OCI-LY7 (cell line): ENCODE measurements at regions of chr7 and their contacts with region 1.

Region 1: GRCh38 chr7:139359366-139360209 is at the start of gene LUC7L2:
- DNase-seq: peak; percentile 99
- H3K4me3 ChIP-seq: peak within 1 kb of the TSS; percentile 90
- H3K27ac ChIP-seq: peak within 1 kb of the TSS; percentile 93
- H3K4me1 ChIP-seq: peaks cover 30% of the 10 kb centered on the region
- CTCF ChIP-seq: 0 out of 2 replicates have a peak, but pooled peaks have one; percentile 26
- total RNA-seq, gene LUC7L2: 79.6 and 94.9 TPM in 2 replicates

Region 2: GRCh38 chr7:139043823-139044812 is 315.5 kb before region 1 on chr7:
- CTCF ChIA-PET with region 1: no interaction called
- POLR2A ChIA-PET with region 1: no interaction called
- intact Hi-C with region 1: no loop called
- DNase-seq: no peak
- H3K4me3 ChIP-seq: no peak overlapping the region
- H3K27ac ChIP-seq: no peak overlapping the region
- H3K4me1 ChIP-seq: no peaks in the 10 kb centered on the region
- CTCF ChIP-seq: no peak

Region 3: GRCh38 chr7:139230774-139231512 is 128.6 kb before region 1 on chr7 and contains the start of gene UBN2:
- CTCF ChIA-PET with region 1: no interaction called
- POLR2A ChIA-PET with region 1: interaction called, 3 read pairs
- intact Hi-C with region 1: loop called (anchors 1 kb)
- DNase-seq: peak; percentile 96
- H3K4me3 ChIP-seq: peak within 1 kb of the TSS; percentile 97
- H3K27ac ChIP-seq: peak within 1 kb of the TSS; percentile 63
- H3K4me1 ChIP-seq: peaks cover 14% of the 10 kb centered on the region
- CTCF ChIP-seq: no peak
- total RNA-seq, gene UBN2: 7.2 and 8.0 TPM in 2 replicates

Region 4: DNA sequence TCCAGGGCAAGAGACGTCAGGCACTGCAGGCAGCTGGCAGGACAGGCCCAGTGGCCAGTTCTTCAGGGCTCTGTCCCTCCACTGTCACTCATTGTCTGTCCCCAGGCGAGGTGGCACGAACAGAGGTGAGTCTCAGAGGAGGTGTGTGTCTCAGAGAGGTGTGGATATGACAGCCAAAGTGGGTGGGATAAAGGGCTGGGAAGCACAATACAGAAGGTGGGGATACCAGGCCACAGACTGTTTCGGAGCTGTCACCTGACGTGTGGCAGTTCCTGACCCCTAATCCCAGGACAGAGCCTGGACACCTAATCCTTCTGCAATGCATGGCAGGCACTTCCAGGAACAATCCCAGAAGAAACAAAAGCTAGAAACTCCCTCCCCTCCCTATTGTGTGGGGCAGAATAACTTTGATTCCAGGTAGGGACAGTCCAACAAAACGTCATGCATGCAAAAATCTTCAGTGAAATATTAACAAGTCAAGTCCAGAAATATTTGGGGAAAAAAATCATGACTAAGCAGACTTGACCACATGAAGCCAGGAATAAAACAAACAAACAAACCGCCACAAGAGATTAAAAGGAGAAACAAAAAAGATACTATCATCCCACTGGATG is 112.3 kb after region 1 on chr7:
- CTCF ChIA-PET with region 1: no interaction called
- POLR2A ChIA-PET with region 1: no interaction called
- intact Hi-C with region 1: no loop called
- DNase-seq: no peak
- H3K4me3 ChIP-seq: no peak overlapping the region
- H3K27ac ChIP-seq: no peak overlapping the region
- H3K4me1 ChIP-seq: no peaks in the 10 kb centered on the region
- CTCF ChIP-seq: no peak